Activated T-helper 2 cell treated with anti-CD3 and anti-CD28 coated beads, Interferon-gamma antibody, Interleukin-2, Interleukin-4, amounts not matched to agents 10 μg/mL and 5 μg/mL and 100 μg/mL, durations not matched to agents 14 hours and 24 hours and 36 hours (primary cell): ENCODE measurements at regions of chr2 and their contacts with region 1.

Region 1: DNA sequence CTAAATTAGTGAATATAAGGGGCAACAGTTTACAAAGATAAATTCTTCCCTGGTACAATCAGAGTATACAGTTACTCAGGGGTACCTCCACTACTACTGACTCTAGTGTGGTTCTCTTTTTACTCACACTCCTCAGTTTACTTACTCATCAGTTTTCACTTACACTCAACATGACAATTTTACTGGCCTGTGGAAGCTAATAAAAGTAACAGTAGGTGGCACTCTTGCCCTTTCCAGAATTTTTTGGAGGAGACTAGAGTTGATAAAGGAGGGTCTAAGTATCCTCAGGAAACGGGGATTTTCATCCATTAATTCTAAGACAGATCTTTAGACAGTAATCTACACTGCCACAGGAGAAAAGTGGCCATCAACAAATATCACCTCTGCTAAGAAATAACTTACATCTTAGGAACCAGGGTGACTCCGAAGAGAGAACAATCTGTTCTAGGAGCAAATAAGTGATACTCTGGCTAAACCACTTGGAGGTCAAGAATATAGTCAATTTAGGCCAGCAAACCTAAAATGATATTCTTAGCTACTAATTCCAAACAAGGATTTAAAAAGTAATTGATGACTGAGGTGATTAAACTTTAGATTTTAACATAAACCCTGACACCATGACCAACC is 61.3 kb downstream of the ATL2 start:
- DNase-seq: no peak
- H3K4me3 Mint-ChIP-seq: no peak overlapping the region
- H3K27ac Mint-ChIP-seq: no peak overlapping the region
- H3K4me1 Mint-ChIP-seq: peaks cover 21% of the 10 kb centered on the region
- H3K27me3 Mint-ChIP-seq: no peaks in the 10 kb centered on the region

Region 2: GRCh38 chr2:38508311-38509039 is 192.7 kb after region 1 on chr2:
- intact Hi-C with region 1: loop called (anchors 1 kb)
- DNase-seq: peak; percentile 63
- H3K4me3 Mint-ChIP-seq: no peak overlapping the region
- H3K27ac Mint-ChIP-seq: no peak overlapping the region
- H3K4me1 Mint-ChIP-seq: peaks cover 10% of the 10 kb centered on the region
- H3K27me3 Mint-ChIP-seq: peaks cover 11% of the 10 kb centered on the region

Region 3: DNA sequence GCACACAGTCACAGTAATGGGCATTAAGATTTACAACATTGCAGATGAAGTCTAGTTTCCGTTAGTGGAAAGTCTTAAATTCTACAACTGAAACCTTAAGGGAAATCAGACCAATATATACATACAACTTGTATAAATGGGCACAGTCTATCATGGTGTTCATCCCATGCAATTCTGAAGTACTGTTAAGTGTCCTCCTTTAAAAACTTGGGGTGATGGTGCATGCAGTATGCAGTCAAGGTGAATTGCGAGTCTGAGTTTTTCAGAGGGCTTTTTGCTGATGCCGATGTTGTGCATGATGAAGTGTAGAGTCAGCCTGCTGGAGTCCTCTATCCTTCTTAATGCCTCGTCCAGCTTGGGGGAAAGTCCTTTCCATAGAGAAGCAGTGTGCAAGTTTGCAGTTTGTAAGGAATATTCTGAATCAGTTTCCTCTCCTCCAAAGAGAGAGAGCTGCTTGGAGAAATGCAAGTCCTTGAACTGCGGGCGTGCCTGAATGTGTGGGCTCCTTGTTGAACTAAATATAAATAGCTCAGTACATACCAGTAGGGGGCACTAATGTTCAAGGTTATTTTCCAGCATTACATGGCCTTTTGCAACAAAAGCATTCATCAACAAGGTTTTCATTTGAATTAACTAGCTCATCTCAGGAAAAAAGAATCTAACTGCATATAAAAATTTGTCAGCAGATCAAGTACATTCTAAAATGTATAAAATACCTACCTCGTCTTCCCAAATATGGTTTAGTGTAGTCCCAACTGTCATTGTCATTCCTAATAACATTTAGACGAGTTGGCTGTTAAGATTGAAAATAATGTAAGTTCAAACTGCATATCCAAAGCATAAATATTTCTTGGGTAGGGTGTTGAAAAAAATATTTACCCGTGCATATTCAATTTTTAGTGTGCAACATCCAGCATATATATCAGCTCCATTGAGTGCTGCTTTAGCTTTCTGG is 265.6 kb after region 1 on chr2:
- intact Hi-C with region 1: loop called (anchors 5 kb)
- DNase-seq: no peak
- H3K4me3 Mint-ChIP-seq: no peak overlapping the region
- H3K27ac Mint-ChIP-seq: peak overlapping the region; percentile 15
- H3K4me1 Mint-ChIP-seq: peaks cover 39% of the 10 kb centered on the region
- H3K27me3 Mint-ChIP-seq: no peaks in the 10 kb centered on the region